Activated CD4-positive, alpha-beta T cell treated with anti-CD3 and anti-CD28 coated beads, Interleukin-2, amount 10 ng/mL, durations not matched to agents 24 days and 14 days (primary cell): ENCODE measurements at regions of chr7 and their contacts with region 1.

Region 1: GRCh38 chr7:98168181-98168905 is 42.9 kb upstream of the BHLHA15 start:
- DNase-seq: peak; percentile 90
- H3K4me3 Mint-ChIP-seq: no peak overlapping the region
- H3K27ac Mint-ChIP-seq: no peak overlapping the region
- H3K4me1 Mint-ChIP-seq: peaks cover 6% of the 10 kb centered on the region
- H3K27me3 Mint-ChIP-seq: no peaks in the 10 kb centered on the region

Region 2: GRCh38 chr7:97872025-97872669 is 296.2 kb before region 1 on chr7 and contains the start of gene ASNS:
- intact Hi-C with region 1: no loop called
- DNase-seq: peak; percentile 97
- H3K4me3 Mint-ChIP-seq: peak within 1 kb of the TSS; percentile 92
- H3K27ac Mint-ChIP-seq: peak within 1 kb of the TSS; percentile 88
- H3K4me1 Mint-ChIP-seq: peaks cover 13% of the 10 kb centered on the region
- H3K27me3 Mint-ChIP-seq: no peaks in the 10 kb centered on the region
- total RNA-seq, gene ASNS: 80.6 and 84.1 TPM in 2 replicates

Region 3: GRCh38 chr7:98021588-98022351 is 146.6 kb before region 1 on chr7:
- intact Hi-C with region 1: loop called (anchors 1 kb)
- DNase-seq: peak; percentile 94
- H3K4me3 Mint-ChIP-seq: no peak overlapping the region
- H3K27ac Mint-ChIP-seq: no peak overlapping the region
- H3K4me1 Mint-ChIP-seq: peaks cover 5% of the 10 kb centered on the region
- H3K27me3 Mint-ChIP-seq: no peaks in the 10 kb centered on the region